H1 (cell line): ENCODE measurements at regions of chr1 and their contacts with region 1.

Region 1: DNA sequence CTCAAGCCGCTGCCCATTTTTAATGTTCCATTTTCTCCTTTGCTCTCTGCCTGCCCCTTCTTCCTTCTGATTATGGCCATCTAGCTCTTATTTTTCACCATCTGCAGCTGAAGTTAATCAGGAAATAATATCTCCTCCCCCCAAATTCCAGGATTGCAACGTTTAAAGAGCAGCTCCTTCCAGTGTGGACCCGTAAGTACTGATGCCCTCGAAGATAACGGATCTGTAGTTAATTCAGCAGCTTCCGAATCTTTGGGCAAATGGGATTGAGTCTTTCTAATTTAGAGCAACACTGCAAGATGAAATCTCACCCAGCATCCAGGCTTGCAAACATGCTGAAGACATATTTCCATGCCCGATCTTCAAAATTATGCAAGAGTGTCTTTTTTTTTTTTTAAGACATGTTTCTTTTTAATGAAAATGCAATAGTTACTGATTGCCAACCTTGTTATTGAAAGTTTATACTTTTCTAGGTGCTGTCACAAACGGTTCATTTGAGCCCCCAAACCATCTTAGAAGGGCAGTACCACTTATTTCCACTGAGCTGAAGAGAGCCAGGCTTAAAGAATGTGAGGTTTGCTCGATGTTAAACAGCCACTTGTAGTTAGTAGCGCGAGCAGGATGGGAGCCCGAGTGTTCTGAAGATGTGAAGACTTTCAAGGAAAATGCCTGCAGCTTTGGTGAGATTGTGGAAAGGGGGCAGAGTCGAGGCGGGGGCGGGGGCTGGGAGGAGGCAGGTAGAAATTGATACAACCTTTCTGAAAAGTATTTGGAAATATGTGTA is 10.9 kb upstream of the RCAN3 start:
- DNase-seq: no peak
- H3K4me3 ChIP-seq: no peak overlapping the region
- H3K27ac ChIP-seq: no peak overlapping the region
- H3K4me1 ChIP-seq: no peaks in the 10 kb centered on the region; a peak in 1 of 7 replicates
- H3K27me3 ChIP-seq: no peaks in the 10 kb centered on the region
- CTCF ChIP-seq: peak in 1 of 3 experiments; percentile 28; a peak in 1 of 4 replicates
- EP300 ChIP-seq: no peak
- POLR2A ChIP-seq: no peak
- RAD21 ChIP-seq: peak in 1 of 2 experiments; percentile 15; a peak in 1 of 4 replicates

Region 2: DNA sequence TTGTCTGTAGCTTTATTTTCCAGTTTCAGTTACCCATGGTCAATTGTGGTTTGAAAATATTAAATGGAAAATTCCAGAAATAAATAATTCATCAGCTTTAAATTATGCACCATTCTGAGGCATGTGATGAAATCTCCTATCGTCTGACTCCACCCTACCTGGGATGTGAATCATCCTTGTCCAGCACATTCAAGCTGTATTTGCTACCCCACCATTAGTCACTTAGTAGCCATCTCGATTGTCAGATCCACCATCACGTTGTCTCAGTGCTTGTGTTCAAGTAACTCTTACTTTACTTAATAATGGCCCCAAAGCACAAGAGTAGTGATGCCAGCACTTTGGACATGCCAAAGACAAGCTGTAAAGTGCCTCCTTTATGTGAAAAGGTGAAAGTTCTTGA is 82.2 kb before region 1 on chr1:
- CTCF ChIA-PET with region 1: no interaction called
- POLR2A ChIA-PET with region 1: no interaction called
- DNase-seq: no peak
- H3K4me3 ChIP-seq: no peak overlapping the region
- H3K27ac ChIP-seq: no peak overlapping the region
- H3K4me1 ChIP-seq: no peaks in the 10 kb centered on the region
- H3K27me3 ChIP-seq: no peaks in the 10 kb centered on the region
- CTCF ChIP-seq: no peak
- EP300 ChIP-seq: no peak
- POLR2A ChIP-seq: no peak
- RAD21 ChIP-seq: no peak

Region 3: DNA sequence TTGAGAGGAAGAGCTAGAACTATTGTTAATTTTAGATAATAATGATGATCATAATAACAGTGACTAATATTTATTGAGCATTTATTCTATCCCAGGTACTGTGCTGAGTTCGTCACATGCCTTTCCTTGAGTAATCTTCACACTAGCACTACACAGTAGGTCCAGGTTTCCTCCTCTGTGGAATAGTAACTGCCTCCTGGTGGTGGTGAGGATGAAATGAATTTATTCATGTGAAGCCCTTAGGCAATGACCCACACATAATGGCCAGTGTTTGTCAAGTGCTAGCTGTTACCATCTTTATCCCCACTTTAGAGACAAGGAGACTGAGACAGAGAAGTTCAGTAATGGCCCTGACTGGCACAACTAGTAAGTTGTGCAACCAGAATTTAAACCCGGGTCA is 70.3 kb before region 1 on chr1:
- CTCF ChIA-PET with region 1: interaction called, 12 read pairs
- POLR2A ChIA-PET with region 1: no interaction called
- DNase-seq: no peak
- H3K4me3 ChIP-seq: no peak overlapping the region
- H3K27ac ChIP-seq: no peak overlapping the region
- H3K4me1 ChIP-seq: no peaks in the 10 kb centered on the region; a peak in 2 of 7 replicates
- H3K27me3 ChIP-seq: no peaks in the 10 kb centered on the region
- CTCF ChIP-seq: peak in 1 of 3 experiments; percentile 22; a peak in 1 of 4 replicates
- EP300 ChIP-seq: no peak
- POLR2A ChIP-seq: no peak
- RAD21 ChIP-seq: peak in 1 of 2 experiments; percentile 28; a peak in 1 of 4 replicates

Region 4: GRCh38 chr1:24502709-24503058 is 10.9 kb after region 1 on chr1 and contains the start of gene RCAN3:
- CTCF ChIA-PET with region 1: interaction called, 15 read pairs
- POLR2A ChIA-PET with region 1: no interaction called
- DNase-seq: peak; percentile 59 to 88
- H3K4me3 ChIP-seq: peak within 1 kb of the TSS; percentile 80 to 95 (median 86)
- H3K27ac ChIP-seq: no peak within 1 kb of the TSS
- H3K4me1 ChIP-seq: peaks cover 2 to 21% (median 11%) of the 10 kb centered on the region in 4 experiments; a peak in 6 of 7 replicates
- H3K27me3 ChIP-seq: peaks cover 0 to 7% (median 0%) of the 10 kb centered on the region in 4 experiments; a peak in 3 of 7 replicates
- CTCF ChIP-seq: no peak
- EP300 ChIP-seq: no peak
- POLR2A ChIP-seq: peak in 1 of 2 experiments; percentile 38; a peak in 1 of 3 replicates
- RAD21 ChIP-seq: no peak
- total RNA-seq, gene RCAN3: 15.2 and 16.6 TPM in 2 replicates